Calu3 (cell line): ENCODE measurements at regions of chr17 and their contacts with region 1.

Region 1: DNA sequence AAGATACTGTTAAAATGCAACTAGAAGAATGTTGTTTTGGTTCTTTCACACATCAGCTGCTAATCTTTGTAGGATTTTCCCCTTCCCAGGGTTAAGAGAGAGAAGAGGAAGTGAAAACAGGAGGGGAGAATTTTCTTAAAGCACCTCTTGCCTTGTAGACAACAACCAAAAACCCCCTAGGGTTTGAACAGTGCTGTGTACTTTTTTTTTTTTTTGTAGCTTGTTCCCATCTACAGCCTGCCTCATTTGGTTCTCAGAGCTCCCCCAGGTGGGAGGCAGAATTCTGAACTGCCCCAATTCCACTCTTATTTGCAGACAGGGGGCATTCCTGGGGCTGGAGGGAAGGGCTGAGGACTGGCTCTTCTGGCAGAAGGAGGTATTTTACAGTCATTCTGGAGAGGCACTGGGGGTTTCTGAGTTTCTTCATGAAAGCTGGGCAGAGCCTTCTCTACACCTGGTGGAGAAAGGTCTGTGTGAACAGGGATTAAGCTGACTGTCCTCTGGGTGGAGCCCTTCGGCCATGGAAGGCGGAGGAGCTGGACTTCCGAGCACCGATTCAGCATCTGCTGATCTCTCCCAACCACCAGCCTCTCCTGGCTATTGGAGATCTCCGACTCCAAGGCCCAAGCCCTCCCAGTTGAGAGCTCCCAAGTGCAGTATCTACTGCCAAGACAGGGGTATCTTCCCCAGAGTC is 32.2 kb downstream of the SMARCE1 start:
- DNase-seq: peak; percentile 100
- H3K4me3 Mint-ChIP-seq: no peak overlapping the region
- H3K27ac Mint-ChIP-seq: no peak overlapping the region
- H3K4me1 Mint-ChIP-seq: peaks cover 26% of the 10 kb centered on the region
- H3K27me3 Mint-ChIP-seq: peaks cover 97% of the 10 kb centered on the region
- CTCF ChIP-seq: no peak

Region 2: GRCh38 chr17:40536295-40537171 is 78.9 kb before region 1 on chr17:
- CTCF ChIA-PET with region 1: interaction called, 105 read pairs
- intact Hi-C with region 1: no loop called
- DNase-seq: peak; percentile 68
- H3K4me3 Mint-ChIP-seq: no peak overlapping the region
- H3K27ac Mint-ChIP-seq: no peak overlapping the region
- H3K4me1 Mint-ChIP-seq: peaks cover 24% of the 10 kb centered on the region
- H3K27me3 Mint-ChIP-seq: peaks cover 85% of the 10 kb centered on the region
- CTCF ChIP-seq: no peak

Region 3: GRCh38 chr17:40598663-40599467 is 16.6 kb before region 1 on chr17:
- CTCF ChIA-PET with region 1: interaction called, 69 read pairs
- intact Hi-C with region 1: no loop called
- DNase-seq: no peak
- H3K4me3 Mint-ChIP-seq: no peak overlapping the region
- H3K27ac Mint-ChIP-seq: no peak overlapping the region
- H3K4me1 Mint-ChIP-seq: peaks cover 10% of the 10 kb centered on the region
- H3K27me3 Mint-ChIP-seq: peaks cover 37% of the 10 kb centered on the region
- CTCF ChIP-seq: no peak

Region 4: DNA sequence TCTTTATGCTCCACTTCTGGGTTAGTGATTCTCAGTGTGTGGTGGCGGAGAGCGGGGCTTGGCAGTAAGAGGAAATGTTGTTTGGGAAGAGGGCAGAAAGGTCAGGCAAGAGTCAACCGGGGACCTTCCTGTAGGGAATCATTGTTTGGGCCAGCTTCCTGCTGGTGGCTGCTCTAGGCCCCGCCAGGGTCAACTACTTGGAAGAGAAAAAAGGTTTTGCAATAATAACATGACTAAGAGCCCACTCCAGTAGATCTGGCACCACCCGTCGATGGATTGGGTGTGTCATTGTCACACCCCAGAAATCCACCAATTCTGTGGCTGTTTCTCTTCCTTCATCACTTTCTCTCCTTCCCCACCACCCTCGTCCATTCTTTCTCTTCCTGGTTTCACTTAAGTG is 92.3 kb after region 1 on chr17:
- CTCF ChIA-PET with region 1: interaction called, 19 read pairs
- intact Hi-C with region 1: no loop called
- DNase-seq: peak; percentile 92
- H3K4me3 Mint-ChIP-seq: no peak overlapping the region
- H3K27ac Mint-ChIP-seq: peak overlapping the region; percentile 14
- H3K4me1 Mint-ChIP-seq: peaks cover 36% of the 10 kb centered on the region
- H3K27me3 Mint-ChIP-seq: peaks cover 14% of the 10 kb centered on the region
- CTCF ChIP-seq: no peak

Region 5: GRCh38 chr17:40763752-40764151 is 148.3 kb after region 1 on chr17:
- CTCF ChIA-PET with region 1: interaction called, 10 read pairs
- intact Hi-C with region 1: no loop called
- DNase-seq: no peak
- H3K4me3 Mint-ChIP-seq: no peak overlapping the region
- H3K27ac Mint-ChIP-seq: no peak overlapping the region
- H3K4me1 Mint-ChIP-seq: no peaks in the 10 kb centered on the region
- H3K27me3 Mint-ChIP-seq: peaks cover 52% of the 10 kb centered on the region
- CTCF ChIP-seq: no peak

Region 6: GRCh38 chr17:40903129-40904065 is 288.0 kb after region 1 on chr17:
- CTCF ChIA-PET with region 1: interaction called, 14 read pairs
- intact Hi-C with region 1: loop called (anchors 2 kb)
- DNase-seq: peak; percentile 82
- H3K4me3 Mint-ChIP-seq: peak overlapping the region; percentile 51
- H3K27ac Mint-ChIP-seq: peak overlapping the region; percentile 92
- H3K4me1 Mint-ChIP-seq: peaks cover 86% of the 10 kb centered on the region
- H3K27me3 Mint-ChIP-seq: no peaks in the 10 kb centered on the region
- CTCF ChIP-seq: no peak